ENCODE measurements at regions of chr22 and their contacts with region 1.

Region 1: DNA sequence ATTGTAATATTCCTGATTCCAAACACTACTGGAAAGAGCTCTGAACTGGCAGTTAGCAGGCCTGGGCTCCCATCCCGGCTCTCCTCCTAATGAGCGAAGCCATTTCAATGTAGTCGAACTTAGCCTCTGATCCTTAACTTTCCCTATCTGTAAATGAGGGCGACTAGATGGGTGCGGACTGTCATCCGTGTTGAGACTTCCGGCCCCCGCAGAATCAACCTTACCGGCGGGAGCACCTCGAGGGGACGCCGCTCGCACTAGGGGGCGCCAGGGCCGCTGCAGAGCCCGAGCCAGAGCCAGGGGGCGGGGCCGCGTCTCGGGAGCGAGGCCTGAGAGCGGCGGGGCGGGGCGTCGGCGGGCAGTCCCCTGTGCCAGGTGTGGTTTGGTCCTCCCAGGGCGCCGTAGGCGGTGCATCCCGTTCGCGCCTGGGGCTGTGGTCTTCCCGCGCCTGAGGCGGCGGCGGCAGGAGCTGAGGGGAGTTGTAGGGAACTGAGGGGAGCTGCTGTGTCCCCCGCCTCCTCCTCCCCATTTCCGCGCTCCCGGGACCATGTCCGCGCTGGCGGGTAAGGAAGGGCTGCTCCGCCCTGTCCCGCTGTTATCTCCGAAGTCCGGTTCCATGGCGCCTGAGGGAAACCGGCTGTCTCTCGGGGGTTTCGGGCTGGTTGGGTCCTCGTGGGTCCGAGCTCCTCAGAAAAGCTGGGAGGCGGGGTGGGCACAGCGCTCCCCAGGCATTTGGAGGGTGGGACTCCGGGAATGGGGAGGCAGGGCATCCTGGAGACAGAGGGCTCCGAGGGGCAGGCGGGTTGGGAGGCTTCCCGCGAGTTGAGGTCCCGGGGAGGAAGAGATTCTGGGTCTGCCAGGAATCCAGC is at the start of gene LIMK2:
- DNase-seq: peak; percentile 96 to 99
- ATAC-seq: peak; percentile 97
- H3K4me3 ChIP-seq: peak within 1 kb of the TSS; percentile 23 to 89
- H3K27ac ChIP-seq: no peak within 1 kb of the TSS
- H3K4me1 ChIP-seq: no peaks in the 10 kb centered on the region
- H3K27me3 ChIP-seq: no peaks in the 10 kb centered on the region
- total RNA-seq, gene LIMK2: 35.4 to 55.2 TPM

Region 2: GRCh38 chr22:31122532-31123291 is 89.4 kb before region 1 on chr22 and contains the start of gene INPP5J:
- intact Hi-C with region 1: loop called in 1 of 2 experiments (anchors 5 kb)
- DNase-seq: peak in 1 of 2 donors; percentile 79
- ATAC-seq: peak; percentile 49
- H3K4me3 ChIP-seq: peak within 1 kb of the TSS in 1 of 2 donors; percentile 40
- H3K27ac ChIP-seq: peak within 1 kb of the TSS in 1 of 2 donors; percentile 23
- H3K4me1 ChIP-seq: no peaks in the 10 kb centered on the region
- H3K27me3 ChIP-seq: no peaks in the 10 kb centered on the region
- total RNA-seq, gene INPP5J: 2.4 to 3.3 TPM

Region 3: GRCh38 chr22:31160328-31160978 is 51.6 kb before region 1 on chr22:
- intact Hi-C with region 1: loop called in 1 of 2 experiments (anchors 5 kb)
- DNase-seq: no peak
- ATAC-seq: peak; percentile 65
- H3K4me3 ChIP-seq: peak overlapping the region; percentile 86 to 96
- H3K27ac ChIP-seq: peak overlapping the region in 1 of 2 donors; percentile 99
- H3K4me1 ChIP-seq: peaks cover 0 to 3% of the 10 kb centered on the region in 2 donors
- H3K27me3 ChIP-seq: no peaks in the 10 kb centered on the region

Region 4: DNA sequence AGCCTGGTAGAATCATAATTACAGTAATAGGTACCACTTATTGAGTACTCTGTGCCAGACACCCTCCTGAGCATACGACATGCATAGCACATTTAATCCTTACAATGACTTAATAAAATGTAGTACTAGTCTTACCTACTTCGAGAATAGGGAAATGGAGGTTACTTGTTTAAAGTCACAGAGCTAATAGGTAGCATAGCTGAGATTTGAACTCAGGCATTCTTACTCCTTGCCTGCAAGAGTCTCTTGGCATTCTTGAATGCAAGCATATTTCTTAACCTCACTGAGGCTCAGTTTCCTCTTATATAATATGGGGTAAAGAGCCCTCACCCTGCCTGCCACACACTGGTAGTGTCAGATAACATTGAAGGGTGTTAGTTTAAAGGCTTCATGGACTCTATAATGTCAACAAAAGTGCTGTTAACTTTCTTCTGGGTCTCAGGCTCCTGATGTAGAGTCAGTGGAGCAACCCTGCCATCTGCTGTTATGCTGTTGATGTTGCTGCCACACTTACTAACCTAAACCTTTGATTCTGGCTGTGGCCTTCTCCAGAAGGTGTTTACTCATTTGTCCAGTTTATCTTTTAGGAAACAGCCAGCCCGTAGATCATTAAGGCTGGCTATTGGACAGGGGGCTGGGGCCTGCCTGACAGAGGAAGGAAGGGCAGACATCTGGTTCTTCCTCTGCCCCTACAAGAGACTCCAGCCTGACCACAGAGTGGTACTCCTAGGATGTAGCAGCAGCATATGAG is 18.9 kb after region 1 on chr22:
- intact Hi-C with region 1: loop called in 1 of 2 experiments (anchors 2 kb)
- DNase-seq: no peak
- ATAC-seq: peak; percentile 78
- H3K4me3 ChIP-seq: no peak overlapping the region
- H3K27ac ChIP-seq: no peak overlapping the region
- H3K4me1 ChIP-seq: no peaks in the 10 kb centered on the region
- H3K27me3 ChIP-seq: no peaks in the 10 kb centered on the region

Region 5: DNA sequence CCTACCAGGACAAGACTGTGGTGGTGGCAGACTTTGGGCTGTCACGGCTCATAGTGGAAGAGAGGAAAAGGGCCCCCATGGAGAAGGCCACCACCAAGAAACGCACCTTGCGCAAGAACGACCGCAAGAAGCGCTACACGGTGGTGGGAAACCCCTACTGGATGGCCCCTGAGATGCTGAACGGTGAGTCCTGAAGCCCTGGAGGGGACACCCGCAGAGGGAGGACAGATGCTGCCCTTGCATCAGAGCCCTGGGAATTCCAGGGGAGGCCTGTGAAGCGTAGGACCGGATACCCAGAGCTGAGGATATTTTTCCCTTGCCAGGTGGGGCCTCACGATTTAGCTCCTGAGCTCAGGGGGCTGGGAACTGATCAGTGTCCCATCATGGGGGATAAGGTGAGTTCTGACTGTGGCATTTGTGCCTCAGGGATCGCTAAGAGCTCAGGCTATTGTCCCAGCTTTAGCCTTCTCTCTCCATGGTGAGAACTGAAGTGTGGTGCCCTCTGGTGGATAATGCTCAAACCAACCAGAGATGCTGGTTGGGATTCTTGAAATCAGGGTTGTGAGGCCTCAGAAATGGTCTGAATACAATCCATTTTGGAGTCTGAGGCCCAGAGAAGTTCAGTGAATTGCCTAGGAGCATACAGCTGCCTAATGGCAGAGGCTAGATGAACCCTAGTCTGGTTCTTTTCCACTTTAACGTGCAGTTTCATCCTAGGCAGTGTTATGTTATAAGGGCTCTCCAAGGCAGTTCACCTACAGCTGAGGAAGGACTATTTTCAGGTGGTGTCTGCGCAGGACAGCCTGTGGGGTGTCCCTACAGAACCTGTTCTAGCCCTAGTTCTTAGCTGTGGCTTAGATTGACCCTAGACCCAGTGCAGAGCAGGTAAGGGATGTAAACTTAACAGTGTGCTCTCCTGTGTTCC is 60.7 kb after region 1 on chr22:
- intact Hi-C with region 1: loop called (anchors 2 to 5 kb)
- DNase-seq: peak in 1 of 2 donors; percentile 48
- ATAC-seq: peak; percentile 69
- H3K4me3 ChIP-seq: no peak overlapping the region
- H3K27ac ChIP-seq: no peak overlapping the region
- H3K4me1 ChIP-seq: no peaks in the 10 kb centered on the region
- H3K27me3 ChIP-seq: no peaks in the 10 kb centered on the region

Measured in aorta (tissue), 5 donors.